Panc1 (cell line): ENCODE measurements at regions of chr4 and their contacts with region 1.

Region 1: GRCh38 chr4:176789955-176790354 is 2.8 kb downstream of the VEGFC start:
- DNase-seq: no peak
- ATAC-seq: peak; percentile 13; the same call in 1 of the 2 replicates
- H3K4me3 ChIP-seq: peak overlapping the region; percentile 63 to 95
- H3K27ac ChIP-seq: peak overlapping the region; percentile 92
- H3K4me1 ChIP-seq: peaks cover 39% of the 10 kb centered on the region
- H3K27me3 ChIP-seq: no peaks in the 10 kb centered on the region
- CTCF ChIP-seq: peak; percentile 70

Region 2: GRCh38 chr4:176377780-176378179 is 412.2 kb before region 1 on chr4:
- CTCF ChIA-PET with region 1: no interaction called
- POLR2A ChIA-PET with region 1: no interaction called
- in situ Hi-C with region 1: no loop called
- intact Hi-C with region 1: loop called (anchors 5 kb)
- DNase-seq: no peak
- ATAC-seq: no peak
- H3K4me3 ChIP-seq: no peak overlapping the region
- H3K27ac ChIP-seq: no peak overlapping the region
- H3K4me1 ChIP-seq: peaks cover 3% of the 10 kb centered on the region; the same call in 1 of the 2 replicates
- H3K27me3 ChIP-seq: no peaks in the 10 kb centered on the region
- CTCF ChIP-seq: peak; percentile 48; the same call in 1 of the 2 replicates

Region 3: GRCh38 chr4:176563591-176563990 is 226.4 kb before region 1 on chr4:
- CTCF ChIA-PET with region 1: no interaction called
- POLR2A ChIA-PET with region 1: no interaction called
- in situ Hi-C with region 1: no loop called
- intact Hi-C with region 1: loop called (anchors 10 kb)
- DNase-seq: no peak
- ATAC-seq: no peak
- H3K4me3 ChIP-seq: no peak overlapping the region
- H3K27ac ChIP-seq: no peak overlapping the region
- H3K4me1 ChIP-seq: no peaks in the 10 kb centered on the region
- H3K27me3 ChIP-seq: no peaks in the 10 kb centered on the region
- CTCF ChIP-seq: peak; percentile 49; the same call in 1 of the 2 replicates

Region 4: DNA sequence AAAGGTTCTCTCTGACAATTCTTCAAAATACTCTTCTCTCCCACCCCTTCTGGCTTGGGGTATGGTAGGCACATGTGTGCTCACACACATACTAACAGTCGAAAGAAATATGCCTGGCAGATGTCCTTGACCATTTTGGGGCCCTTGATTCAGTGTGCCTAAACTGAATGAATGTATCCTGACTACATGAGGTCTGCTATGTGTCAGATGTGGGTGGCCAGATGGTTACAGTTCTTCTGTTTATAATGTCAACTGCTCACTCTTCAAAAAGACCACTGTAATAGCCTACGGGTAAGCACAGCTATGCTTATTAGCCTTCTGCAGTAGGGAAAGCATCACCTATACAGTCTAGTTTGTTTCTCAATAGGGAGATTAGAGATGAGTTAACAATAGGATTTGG is 66.5 kb after region 1 on chr4:
- CTCF ChIA-PET with region 1: no interaction called
- POLR2A ChIA-PET with region 1: no interaction called
- in situ Hi-C with region 1: no loop called
- intact Hi-C with region 1: no loop called
- DNase-seq: no peak
- ATAC-seq: no peak
- H3K4me3 ChIP-seq: no peak overlapping the region
- H3K27ac ChIP-seq: no peak overlapping the region
- H3K4me1 ChIP-seq: no peaks in the 10 kb centered on the region
- H3K27me3 ChIP-seq: no peaks in the 10 kb centered on the region
- CTCF ChIP-seq: no peak

Region 5: DNA sequence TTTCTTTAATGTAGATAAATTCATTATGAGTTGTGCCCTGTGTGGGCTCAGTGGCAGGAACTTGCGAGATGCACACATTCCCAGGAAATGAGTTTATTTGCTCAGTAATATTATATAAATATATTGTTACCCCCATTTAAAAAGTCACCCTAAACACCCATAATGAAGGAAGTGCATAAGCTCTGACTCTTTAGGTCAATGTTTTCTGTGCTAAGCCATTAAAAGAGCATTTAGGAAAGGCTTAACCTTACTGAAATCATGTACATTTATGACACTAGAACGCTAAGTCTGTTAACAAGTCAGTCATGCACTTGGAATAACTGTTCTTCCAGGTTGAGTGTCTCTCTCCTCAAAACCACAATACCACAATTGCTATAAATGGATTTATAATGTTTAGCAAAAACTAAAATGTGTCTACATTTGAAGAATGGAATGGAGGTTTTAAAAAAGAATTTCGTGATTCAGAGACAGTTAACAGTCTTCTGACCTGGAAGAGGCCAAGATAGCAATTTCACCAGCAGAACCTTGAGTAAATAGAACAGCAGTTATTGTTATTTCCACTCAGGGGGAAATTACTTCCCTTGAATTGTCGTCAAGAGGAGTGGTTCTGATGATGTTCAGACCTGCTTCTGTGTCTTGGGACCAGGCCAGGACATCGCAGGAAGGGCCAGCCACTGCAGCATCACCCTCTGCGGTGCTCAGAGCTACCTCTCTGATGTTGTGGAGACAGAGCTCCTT is 93.9 kb after region 1 on chr4:
- CTCF ChIA-PET with region 1: no interaction called
- POLR2A ChIA-PET with region 1: no interaction called
- in situ Hi-C with region 1: no loop called
- intact Hi-C with region 1: loop called (anchors 5 kb)
- DNase-seq: peak; percentile 74
- ATAC-seq: peak; percentile 86
- H3K4me3 ChIP-seq: peak overlapping the region; percentile 24 to 36
- H3K27ac ChIP-seq: peak overlapping the region; percentile 63
- H3K4me1 ChIP-seq: peaks cover 11% of the 10 kb centered on the region; the same call in 1 of the 2 replicates
- H3K27me3 ChIP-seq: no peaks in the 10 kb centered on the region
- CTCF ChIP-seq: no peak

Region 6: DNA sequence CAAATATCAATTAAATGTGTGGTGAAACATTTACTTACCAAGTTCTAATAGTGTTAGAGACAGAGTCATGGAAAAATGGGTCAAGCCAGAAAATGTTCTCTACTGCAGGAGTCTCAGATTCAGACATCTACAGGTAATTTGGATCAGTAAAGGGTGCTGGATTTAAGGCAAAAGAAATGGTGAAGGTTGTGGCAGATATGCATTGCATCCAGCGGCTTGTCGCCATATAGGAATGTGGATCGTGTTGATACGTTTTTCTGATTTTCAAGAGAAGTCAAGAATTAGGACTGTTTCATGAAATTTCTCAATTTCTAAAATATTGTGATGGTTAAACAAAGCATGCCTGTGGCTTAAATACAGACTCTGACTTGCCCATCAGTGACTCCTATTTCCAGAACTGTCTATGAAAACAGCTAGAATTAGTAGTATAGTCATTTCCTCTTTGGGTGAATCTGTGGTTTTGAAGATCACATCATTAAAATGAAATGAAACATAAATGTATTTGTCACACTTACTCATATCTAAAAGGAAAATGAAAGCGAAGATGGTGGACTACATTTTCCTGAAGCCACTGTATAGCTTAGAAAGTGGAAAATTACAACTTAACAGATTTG is 112.9 kb after region 1 on chr4:
- CTCF ChIA-PET with region 1: no interaction called
- POLR2A ChIA-PET with region 1: no interaction called
- in situ Hi-C with region 1: no loop called
- intact Hi-C with region 1: loop called (anchors 5 kb)
- DNase-seq: peak; percentile 64
- ATAC-seq: peak; percentile 44; the same call in 1 of the 2 replicates
- H3K4me3 ChIP-seq: peak overlapping the region in 1 of 2 experiments; percentile 19; a peak in 2 of 4 replicates
- H3K27ac ChIP-seq: peak overlapping the region; percentile 73
- H3K4me1 ChIP-seq: peaks cover 20% of the 10 kb centered on the region; the same call in 1 of the 2 replicates
- H3K27me3 ChIP-seq: no peaks in the 10 kb centered on the region
- CTCF ChIP-seq: no peak

Region 7: DNA sequence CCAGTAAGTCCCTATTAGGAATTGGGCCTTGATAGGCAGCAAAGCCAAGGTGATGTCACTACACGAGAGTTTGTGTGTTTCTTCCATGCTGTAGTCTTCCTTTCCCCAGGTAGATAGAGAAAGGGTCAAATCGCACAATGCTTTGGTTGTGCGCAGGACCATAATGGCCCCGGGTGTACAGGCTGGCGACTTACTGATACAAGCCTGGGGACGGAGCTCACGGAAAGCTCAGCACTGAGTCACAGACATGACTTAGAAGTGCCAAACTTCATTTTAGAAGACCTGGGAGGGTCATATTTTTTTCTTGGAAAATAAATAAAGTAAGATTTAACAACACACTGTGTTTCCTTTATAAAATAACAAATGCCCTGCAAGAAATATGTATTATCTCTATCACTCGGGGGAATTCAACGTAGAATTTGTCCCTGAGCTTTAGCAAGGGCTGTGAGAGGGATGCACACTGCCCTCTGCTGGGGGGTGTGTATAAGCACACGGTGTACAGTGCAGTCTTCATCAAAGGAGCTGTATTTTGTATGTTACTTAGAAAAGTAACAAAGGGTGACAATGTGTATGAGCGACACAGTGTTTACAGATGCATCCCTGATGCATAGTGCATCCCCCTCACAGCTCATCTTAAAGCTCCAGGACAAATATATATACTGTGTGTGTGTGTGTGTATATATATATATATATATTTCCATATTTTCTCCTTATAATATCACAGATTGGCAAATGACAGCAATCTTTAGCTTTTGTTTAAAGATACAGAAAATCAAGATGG is 257.3 kb after region 1 on chr4:
- CTCF ChIA-PET with region 1: interaction called, 3 read pairs
- POLR2A ChIA-PET with region 1: no interaction called
- in situ Hi-C with region 1: no loop called
- intact Hi-C with region 1: loop called (anchors 2 kb)
- DNase-seq: peak; percentile 53
- ATAC-seq: peak; percentile 97
- H3K4me3 ChIP-seq: no peak overlapping the region
- H3K27ac ChIP-seq: peak overlapping the region; percentile 51; the same call in 1 of the 2 replicates
- H3K4me1 ChIP-seq: no peaks in the 10 kb centered on the region
- H3K27me3 ChIP-seq: no peaks in the 10 kb centered on the region
- CTCF ChIP-seq: peak; percentile 74